ENCODE measurements at regions of chr4 and their contacts with region 1.

Region 1: DNA sequence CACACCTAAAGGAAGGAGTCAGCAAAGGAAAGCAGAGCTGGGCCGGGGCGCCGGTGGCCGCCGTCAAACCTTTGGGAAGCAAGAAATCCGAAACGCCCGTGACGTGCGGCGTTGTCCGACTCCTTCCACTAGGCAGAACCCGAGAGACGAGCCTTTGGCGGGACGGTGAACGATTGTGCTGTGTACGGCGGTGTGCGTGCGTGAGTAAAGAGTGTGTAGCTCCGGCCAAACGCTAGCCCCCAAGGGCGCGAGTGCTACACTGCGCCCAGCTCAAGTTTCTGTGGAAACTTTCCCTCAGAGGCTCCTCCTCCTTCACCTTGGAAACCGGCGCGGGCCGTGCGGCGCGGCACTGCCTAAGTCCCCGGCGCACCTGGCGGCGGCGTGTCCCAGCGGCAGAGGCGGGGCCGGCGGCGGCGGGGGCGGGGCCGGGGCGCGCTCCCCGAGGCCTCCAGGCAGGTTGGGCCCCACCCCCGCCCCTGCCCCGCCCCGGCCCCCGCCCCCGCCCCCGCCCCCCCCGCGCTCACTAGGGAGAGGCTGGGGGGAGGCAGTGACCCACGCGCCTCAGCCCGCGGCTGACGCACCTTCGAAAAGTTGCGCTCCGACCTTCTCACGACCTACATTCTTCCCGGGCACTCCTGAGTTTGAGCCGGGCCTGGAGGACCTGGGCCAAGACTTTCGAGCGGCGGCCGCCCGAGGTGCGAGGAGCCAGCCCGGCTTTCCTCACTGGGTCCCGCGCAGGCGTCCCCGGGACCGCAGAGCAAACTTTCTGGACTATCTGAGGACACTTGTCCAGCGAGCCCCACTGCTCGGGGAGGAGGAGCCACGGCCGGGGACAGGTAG is at the start of gene FHIP1A:
- DNase-seq: peak; percentile 73 to 93 (median 85)
- ATAC-seq: peak; percentile 93
- H3K4me3 ChIP-seq: peak within 1 kb of the TSS; percentile 68
- H3K4me3 Mint-ChIP-seq: peak within 1 kb of the TSS; percentile 96
- H3K27ac ChIP-seq: no peak within 1 kb of the TSS
- H3K27ac Mint-ChIP-seq: peak within 1 kb of the TSS; percentile 83
- H3K4me1 ChIP-seq: peaks cover 27% of the 10 kb centered on the region
- H3K4me1 Mint-ChIP-seq: peaks cover 27% of the 10 kb centered on the region
- H3K27me3 ChIP-seq: peaks cover 0 to 4% of the 10 kb centered on the region in 2 experiments
- H3K27me3 Mint-ChIP-seq: peaks cover 4% of the 10 kb centered on the region
- CTCF ChIP-seq: no peak
- total RNA-seq, gene FHIP1A: 2.4 to 3.2 TPM

Region 2: GRCh38 chr4:150140774-150141400 is 1268.0 kb before region 1 on chr4:
- CTCF ChIA-PET with region 1: no interaction called
- POLR2A ChIA-PET with region 1: no interaction called
- intact Hi-C with region 1: no loop called
- DNase-seq: no peak
- ATAC-seq: no peak
- H3K4me3 ChIP-seq: no peak overlapping the region
- H3K4me3 Mint-ChIP-seq: no peak overlapping the region
- H3K27ac ChIP-seq: no peak overlapping the region
- H3K27ac Mint-ChIP-seq: no peak overlapping the region
- H3K4me1 ChIP-seq: no peaks in the 10 kb centered on the region
- H3K4me1 Mint-ChIP-seq: no peaks in the 10 kb centered on the region
- H3K27me3 ChIP-seq: peaks cover 0 to 2% of the 10 kb centered on the region in 2 experiments
- H3K27me3 Mint-ChIP-seq: no peaks in the 10 kb centered on the region
- CTCF ChIP-seq: no peak

Region 3: DNA sequence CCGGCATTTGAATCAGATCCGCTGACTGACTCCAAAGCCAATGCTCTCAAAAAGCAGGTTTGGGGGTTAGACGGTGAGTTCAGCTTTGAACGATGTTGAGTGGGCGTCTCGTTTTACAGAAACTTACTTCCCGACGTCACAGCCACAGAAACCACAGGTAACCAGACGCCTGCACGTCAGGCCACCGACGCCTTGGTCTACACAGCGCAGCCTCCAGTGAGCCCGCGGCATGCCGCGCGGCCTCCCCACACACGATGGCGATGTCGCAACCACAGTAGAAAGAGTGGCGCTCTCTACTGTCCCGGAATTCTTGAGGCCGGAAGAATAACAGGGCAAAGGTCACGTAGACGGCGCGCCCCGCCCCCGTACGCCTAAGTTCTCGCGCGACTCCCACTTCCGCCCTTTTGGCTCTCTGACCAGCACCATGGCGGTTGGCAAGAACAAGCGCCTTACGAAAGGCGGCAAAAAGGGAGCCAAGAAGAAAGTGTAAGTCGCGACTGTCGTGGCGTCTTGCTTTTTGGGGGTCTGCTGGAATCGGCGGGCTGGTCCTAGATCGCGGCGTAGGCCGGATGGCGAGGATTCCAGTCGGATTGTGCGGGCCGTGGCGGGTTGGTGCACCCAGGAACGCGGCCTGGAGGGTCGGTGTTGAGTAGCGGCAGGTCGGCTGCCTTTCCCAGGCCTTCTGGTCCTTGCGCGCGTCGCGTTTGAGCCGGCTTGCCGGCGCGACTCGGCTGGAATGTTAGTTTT is 309.4 kb before region 1 on chr4 and contains the start of gene RPS3A:
- CTCF ChIA-PET with region 1: interaction called, 3 read pairs
- POLR2A ChIA-PET with region 1: no interaction called
- intact Hi-C with region 1: loop called in 1 of 2 experiments (anchors 5 kb)
- DNase-seq: peak; percentile 96 to 99 (median 98)
- ATAC-seq: peak; percentile 83
- H3K4me3 ChIP-seq: peak within 1 kb of the TSS; percentile 74
- H3K4me3 Mint-ChIP-seq: peak within 1 kb of the TSS; percentile 87
- H3K27ac ChIP-seq: peak within 1 kb of the TSS; percentile 82 to 97
- H3K27ac Mint-ChIP-seq: peak within 1 kb of the TSS; percentile 88
- H3K4me1 ChIP-seq: peaks cover 26% of the 10 kb centered on the region
- H3K4me1 Mint-ChIP-seq: peaks cover 36% of the 10 kb centered on the region
- H3K27me3 ChIP-seq: no peaks in the 10 kb centered on the region
- H3K27me3 Mint-ChIP-seq: no peaks in the 10 kb centered on the region
- CTCF ChIP-seq: peak; percentile 91
- total RNA-seq, gene RPS3A: 3,925 to 4,071 TPM

Region 4: GRCh38 chr4:151376540-151376939 is 32.3 kb before region 1 on chr4:
- CTCF ChIA-PET with region 1: no interaction called
- POLR2A ChIA-PET with region 1: no interaction called
- intact Hi-C with region 1: no loop called
- DNase-seq: no peak
- ATAC-seq: no peak
- H3K4me3 ChIP-seq: no peak overlapping the region
- H3K4me3 Mint-ChIP-seq: no peak overlapping the region
- H3K27ac ChIP-seq: no peak overlapping the region
- H3K27ac Mint-ChIP-seq: no peak overlapping the region
- H3K4me1 ChIP-seq: no peaks in the 10 kb centered on the region
- H3K4me1 Mint-ChIP-seq: no peaks in the 10 kb centered on the region
- H3K27me3 ChIP-seq: peaks cover 0 to 3% of the 10 kb centered on the region in 2 experiments
- H3K27me3 Mint-ChIP-seq: peaks cover 36% of the 10 kb centered on the region
- CTCF ChIP-seq: no peak

Region 5: DNA sequence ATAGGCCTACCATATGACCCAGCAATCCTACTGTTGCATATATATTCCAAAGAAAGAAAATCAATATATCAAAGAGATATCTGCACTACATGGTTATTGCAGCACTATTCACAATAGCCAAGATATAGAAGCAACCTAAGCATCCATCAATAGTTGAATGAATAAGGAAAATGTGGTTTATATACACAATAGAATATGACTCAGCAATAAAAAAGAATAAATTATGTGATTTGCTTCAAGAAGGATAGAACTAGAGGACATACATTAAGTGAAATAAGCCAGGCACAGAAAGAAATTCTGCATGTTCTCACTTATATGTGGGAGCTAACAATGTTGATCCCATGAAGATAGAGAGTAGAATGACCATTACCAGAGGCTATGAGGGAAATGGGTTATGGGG is 13.0 kb before region 1 on chr4:
- CTCF ChIA-PET with region 1: no interaction called
- POLR2A ChIA-PET with region 1: no interaction called
- intact Hi-C with region 1: no loop called
- DNase-seq: no peak
- ATAC-seq: no peak
- H3K4me3 ChIP-seq: no peak overlapping the region
- H3K4me3 Mint-ChIP-seq: no peak overlapping the region
- H3K27ac ChIP-seq: no peak overlapping the region
- H3K27ac Mint-ChIP-seq: no peak overlapping the region
- H3K4me1 ChIP-seq: no peaks in the 10 kb centered on the region
- H3K4me1 Mint-ChIP-seq: no peaks in the 10 kb centered on the region
- H3K27me3 ChIP-seq: no peaks in the 10 kb centered on the region
- H3K27me3 Mint-ChIP-seq: peaks cover 9% of the 10 kb centered on the region
- CTCF ChIP-seq: no peak

Region 6: DNA sequence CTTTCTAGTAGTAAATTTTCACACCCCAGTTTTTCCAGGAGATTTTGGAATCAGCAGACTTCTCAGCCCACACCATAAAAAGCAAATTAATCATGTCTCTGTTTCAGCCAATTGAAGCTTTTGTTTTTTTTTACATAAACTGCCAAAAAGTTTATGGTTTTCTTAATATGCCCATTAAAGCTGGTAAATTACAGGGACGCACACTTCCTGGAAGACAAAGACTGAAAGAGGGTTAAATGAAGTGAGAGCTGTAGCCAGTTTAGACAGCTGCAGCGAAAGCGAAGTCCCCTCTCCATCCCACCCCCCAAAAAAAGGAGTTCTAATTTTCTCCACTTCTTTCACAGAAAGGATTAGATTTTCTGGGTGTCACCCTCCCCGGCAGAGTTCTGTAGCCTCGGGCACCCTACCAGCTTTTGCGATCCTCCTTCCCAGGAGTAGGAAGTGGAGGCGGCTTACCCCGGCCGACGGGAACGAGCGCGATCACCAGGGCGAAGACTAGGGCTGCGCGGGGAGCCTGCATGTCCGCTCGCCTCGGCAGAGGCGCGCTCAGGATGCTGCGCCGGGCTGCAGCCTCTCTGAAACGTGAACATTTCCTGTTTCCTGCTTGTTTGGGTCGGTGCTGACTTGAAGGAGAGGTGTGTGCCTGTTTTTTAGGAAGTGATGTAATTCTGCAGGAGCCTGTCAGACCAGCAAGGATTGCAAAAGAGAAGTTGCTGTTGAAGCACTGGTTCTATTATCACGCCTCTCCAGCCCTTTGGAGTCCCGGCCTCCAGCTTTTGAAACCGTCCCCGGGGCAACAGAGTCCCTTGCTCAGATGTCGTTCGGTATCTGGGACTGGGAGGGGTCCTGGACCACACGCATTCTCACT is 1270.8 kb after region 1 on chr4 and contains the start of gene TMEM154:
- CTCF ChIA-PET with region 1: no interaction called
- POLR2A ChIA-PET with region 1: no interaction called
- intact Hi-C with region 1: loop called in 1 of 2 experiments (anchors 10 kb)
- DNase-seq: peak; percentile 48 to 90 (median 67)
- ATAC-seq: peak; percentile 98
- H3K4me3 ChIP-seq: peak within 1 kb of the TSS; percentile 88
- H3K4me3 Mint-ChIP-seq: peak within 1 kb of the TSS; percentile 97
- H3K27ac ChIP-seq: peak within 1 kb of the TSS; percentile 66 to 73
- H3K27ac Mint-ChIP-seq: peak within 1 kb of the TSS; percentile 98
- H3K4me1 ChIP-seq: peaks cover 31% of the 10 kb centered on the region
- H3K4me1 Mint-ChIP-seq: peaks cover 52% of the 10 kb centered on the region
- H3K27me3 ChIP-seq: no peaks in the 10 kb centered on the region
- H3K27me3 Mint-ChIP-seq: no peaks in the 10 kb centered on the region
- CTCF ChIP-seq: no peak
- total RNA-seq, gene TMEM154: 13.6 to 16.7 TPM

Region 7: DNA sequence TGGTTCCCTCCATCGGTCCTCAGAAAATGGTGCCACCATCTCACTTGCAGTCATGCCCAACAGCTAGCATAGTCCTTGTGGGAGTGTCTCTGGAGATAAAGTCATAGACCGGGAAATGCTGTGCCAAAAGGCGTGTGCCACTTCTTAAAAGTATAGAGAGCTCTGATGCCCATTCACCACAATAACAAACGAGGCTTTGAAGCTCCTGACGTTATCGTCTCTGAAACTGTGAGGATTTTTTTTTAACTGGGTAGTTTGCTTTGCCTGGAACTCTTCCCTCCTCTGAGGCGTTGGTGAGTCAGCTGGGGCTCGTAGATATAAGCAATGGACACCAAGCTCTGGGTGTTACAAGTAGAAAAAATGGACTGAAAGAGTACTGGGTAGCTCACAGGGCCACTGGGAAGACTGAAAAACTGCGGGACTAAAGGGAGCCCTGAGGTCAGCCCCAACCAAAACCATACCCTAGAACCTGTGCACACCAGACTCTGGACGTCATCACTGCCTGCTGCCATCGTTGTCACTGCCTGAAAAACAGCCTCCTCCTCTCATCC is 1706.0 kb after region 1 on chr4:
- CTCF ChIA-PET with region 1: no interaction called
- POLR2A ChIA-PET with region 1: no interaction called
- intact Hi-C with region 1: no loop called
- DNase-seq: peak in 13 of 14 experiments; percentile 37 to 90 (median 59)
- ATAC-seq: peak; percentile 65
- H3K4me3 ChIP-seq: peak overlapping the region; percentile 20
- H3K4me3 Mint-ChIP-seq: no peak overlapping the region
- H3K27ac ChIP-seq: peak overlapping the region; percentile 66
- H3K27ac Mint-ChIP-seq: no peak overlapping the region
- H3K4me1 ChIP-seq: peaks cover 66% of the 10 kb centered on the region
- H3K4me1 Mint-ChIP-seq: peaks cover 15% of the 10 kb centered on the region
- H3K27me3 ChIP-seq: no peaks in the 10 kb centered on the region
- H3K27me3 Mint-ChIP-seq: no peaks in the 10 kb centered on the region
- CTCF ChIP-seq: no peak

Measured in CD4-positive, alpha-beta T cell (primary cell).